Activated CD8-positive, alpha-beta memory T cell treated with anti-CD3 and anti-CD28 coated beads, Interleukin-2, amount 10 ng/mL, durations not matched to agents 7 days and 5 days (primary cell): ENCODE measurements at regions of chr6 and their contacts with region 1.

Region 1: GRCh38 chr6:105484238-105485161 is 81.6 kb upstream of the PREP start:
- DNase-seq: peak; percentile 51
- ATAC-seq: peak; percentile 73
- H3K4me3 Mint-ChIP-seq: peak overlapping the region; percentile 51
- H3K27ac Mint-ChIP-seq: peak overlapping the region; percentile 86
- H3K4me1 Mint-ChIP-seq: peaks cover 80% of the 10 kb centered on the region
- H3K27me3 Mint-ChIP-seq: no peaks in the 10 kb centered on the region

Region 2: GRCh38 chr6:105431226-105431625 is 53.3 kb before region 1 on chr6:
- CTCF ChIA-PET with region 1: interaction called, 23 read pairs
- DNase-seq: no peak
- ATAC-seq: peak; percentile 45
- H3K4me3 Mint-ChIP-seq: no peak overlapping the region
- H3K27ac Mint-ChIP-seq: no peak overlapping the region
- H3K4me1 Mint-ChIP-seq: peaks cover 13% of the 10 kb centered on the region
- H3K27me3 Mint-ChIP-seq: no peaks in the 10 kb centered on the region

Region 3: DNA sequence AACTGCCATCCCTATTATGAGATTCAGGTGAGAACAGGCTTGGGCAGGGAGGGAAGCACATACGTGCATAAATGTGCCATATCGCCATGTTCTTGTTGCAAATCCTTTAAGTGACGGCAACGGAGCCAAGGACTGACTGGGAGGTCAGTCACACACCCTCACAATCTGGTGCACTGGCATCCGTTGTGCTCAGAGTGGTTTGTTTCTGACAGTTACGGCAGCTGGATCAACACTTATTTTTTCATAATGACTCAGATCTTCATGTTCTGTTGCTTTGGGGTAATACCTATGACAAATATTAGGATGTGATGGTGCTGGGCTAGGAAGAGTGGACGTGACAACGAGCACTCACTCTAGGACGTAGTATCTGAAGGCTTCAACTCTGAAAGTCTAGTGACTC is 25.5 kb before region 1 on chr6:
- CTCF ChIA-PET with region 1: interaction called, 13 read pairs
- DNase-seq: peak; percentile 87
- ATAC-seq: peak; percentile 89
- H3K4me3 Mint-ChIP-seq: peak overlapping the region; percentile 57
- H3K27ac Mint-ChIP-seq: peak overlapping the region; percentile 89
- H3K4me1 Mint-ChIP-seq: peaks cover 66% of the 10 kb centered on the region
- H3K27me3 Mint-ChIP-seq: no peaks in the 10 kb centered on the region

Region 4: DNA sequence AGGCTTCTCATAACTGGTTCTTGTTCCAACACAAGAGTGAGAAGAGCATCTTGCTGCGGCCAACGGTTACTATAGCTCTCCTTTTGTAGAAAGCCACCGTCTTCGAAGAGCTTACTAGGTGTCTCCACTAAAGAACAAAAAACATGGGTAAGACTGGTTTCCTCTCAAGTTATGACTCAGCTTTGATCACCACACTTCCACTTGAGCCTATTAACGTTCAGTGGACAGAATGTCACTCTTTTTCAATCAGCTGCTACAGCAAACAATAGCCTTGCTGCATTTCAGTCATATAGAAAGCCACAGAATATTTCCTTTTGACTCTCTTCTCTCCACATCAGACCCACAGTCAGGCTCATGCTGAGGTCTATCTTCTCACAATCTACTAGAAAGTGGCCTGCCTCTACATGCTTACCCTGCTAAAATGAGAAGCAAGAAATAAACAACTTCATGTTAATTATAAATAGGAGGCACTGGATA is 161.9 kb after region 1 on chr6:
- CTCF ChIA-PET with region 1: interaction called, 15 read pairs
- DNase-seq: peak; percentile 92
- ATAC-seq: peak; percentile 85
- H3K4me3 Mint-ChIP-seq: peak overlapping the region; percentile 60
- H3K27ac Mint-ChIP-seq: peak overlapping the region; percentile 99
- H3K4me1 Mint-ChIP-seq: peaks cover 92% of the 10 kb centered on the region
- H3K27me3 Mint-ChIP-seq: no peaks in the 10 kb centered on the region